ENCODE measurements at regions of chr5 and their contacts with region 1.

Region 1: DNA sequence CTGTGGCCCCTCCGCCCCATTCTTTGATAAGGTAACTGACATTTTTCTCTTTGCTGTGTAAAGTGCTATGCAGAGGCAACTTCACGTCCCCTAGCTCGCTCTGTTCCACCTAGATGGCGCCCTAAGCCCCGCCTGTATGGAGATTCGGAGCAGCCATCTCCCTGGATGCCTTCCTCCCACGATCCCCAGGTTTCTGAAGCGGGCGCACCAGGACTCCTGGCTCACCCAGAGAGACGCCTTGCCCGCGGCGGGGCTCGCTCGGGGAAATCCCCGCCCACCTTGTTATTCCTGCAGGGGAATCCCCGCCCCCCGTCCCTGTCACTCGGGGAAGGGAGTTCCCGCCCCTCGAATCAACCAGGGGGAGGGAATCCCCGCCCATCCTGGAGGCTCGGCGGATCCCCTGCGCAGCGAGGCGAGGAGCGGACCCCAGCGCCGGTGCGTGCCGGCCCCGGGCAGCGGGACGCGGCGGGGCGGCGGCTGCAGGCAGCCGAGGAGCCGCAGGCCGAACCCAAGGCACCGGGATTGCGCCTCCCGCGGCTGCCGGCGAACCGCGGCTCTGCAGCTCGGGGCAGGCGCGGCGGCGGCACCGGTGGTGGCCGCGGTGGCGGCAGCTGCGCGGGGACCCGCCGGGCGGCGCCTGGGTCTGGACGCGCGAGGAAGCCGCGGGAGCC is at the start of gene PDZD2:
- DNase-seq: peak; percentile 86 to 89
- ATAC-seq: peak; percentile 75 to 85 (median 82)
- H3K4me3 ChIP-seq: peak within 1 kb of the TSS; percentile 30 to 92 (median 79)
- H3K27ac ChIP-seq: peak within 1 kb of the TSS; percentile 51 to 86 (median 78)
- H3K4me1 ChIP-seq: peaks cover 13 to 83% (median 47%) of the 10 kb centered on the region in 9 donors
- H3K27me3 ChIP-seq: peaks cover 0 to 26% (median 0%) of the 10 kb centered on the region in 7 donors
- CTCF ChIP-seq: peak in 8 of 9 donors; percentile 10 to 66 (median 41)
- total RNA-seq, gene PDZD2: 41.6 to 117 (median 89.0) TPM

Region 2: DNA sequence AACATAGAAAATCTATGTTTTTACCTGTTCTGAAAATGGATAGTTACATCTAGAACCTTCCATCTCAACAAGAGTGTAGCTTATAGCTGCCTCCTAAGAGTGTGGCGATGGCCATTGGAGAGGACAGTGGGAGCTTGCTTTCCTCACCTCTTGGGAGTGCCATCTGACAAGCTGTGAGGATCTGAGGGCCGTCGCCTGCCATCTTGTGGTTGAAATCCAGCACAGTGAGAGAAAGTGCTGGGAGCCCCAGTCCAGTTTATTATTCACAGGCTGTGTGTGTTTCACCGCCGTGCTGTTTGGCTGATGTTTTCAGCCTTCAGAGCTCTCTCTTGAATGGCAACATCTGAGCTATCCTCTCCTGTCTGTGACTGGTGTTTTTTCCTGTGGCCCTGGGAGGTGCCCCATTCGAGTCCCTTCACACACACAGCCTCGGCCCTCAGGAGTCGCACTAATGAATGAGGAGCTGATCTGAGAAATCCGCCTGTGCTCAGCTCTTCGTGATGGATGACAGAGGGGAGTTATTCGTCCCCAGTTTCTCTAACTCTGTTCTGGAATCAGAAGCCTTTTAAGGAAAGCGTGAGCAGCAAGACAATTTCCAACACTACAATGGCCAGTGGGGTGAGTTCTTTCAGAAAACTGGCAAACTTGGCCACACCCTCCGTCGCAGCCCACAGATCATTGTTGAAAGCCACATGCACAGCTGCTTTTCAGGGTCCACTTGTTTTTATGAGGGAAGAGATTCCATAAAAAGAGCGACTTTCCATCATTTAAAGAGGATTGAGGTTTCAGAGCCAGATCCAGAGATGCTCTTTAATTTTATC is 170.4 kb after region 1 on chr5:
- intact Hi-C with region 1: loop called in 8 of 10 experiments (anchors 1 to 10 kb)
- DNase-seq: peak; percentile 65 to 75
- ATAC-seq: peak; percentile 80 to 95 (median 91)
- H3K4me3 ChIP-seq: no peak overlapping the region
- H3K27ac ChIP-seq: no peak overlapping the region
- H3K4me1 ChIP-seq: peaks cover 0 to 27% (median 8%) of the 10 kb centered on the region in 9 donors
- H3K27me3 ChIP-seq: no peaks in the 10 kb centered on the region
- CTCF ChIP-seq: peak; percentile 65 to 90 (median 82)